Activated CD4-positive, alpha-beta T cell treated with anti-CD3 and anti-CD28 coated beads, Interleukin-2, amount 10 ng/mL, durations not matched to agents 24 days and 14 days (primary cell): ENCODE measurements at regions of chr19 and their contacts with region 1.

Region 1: DNA sequence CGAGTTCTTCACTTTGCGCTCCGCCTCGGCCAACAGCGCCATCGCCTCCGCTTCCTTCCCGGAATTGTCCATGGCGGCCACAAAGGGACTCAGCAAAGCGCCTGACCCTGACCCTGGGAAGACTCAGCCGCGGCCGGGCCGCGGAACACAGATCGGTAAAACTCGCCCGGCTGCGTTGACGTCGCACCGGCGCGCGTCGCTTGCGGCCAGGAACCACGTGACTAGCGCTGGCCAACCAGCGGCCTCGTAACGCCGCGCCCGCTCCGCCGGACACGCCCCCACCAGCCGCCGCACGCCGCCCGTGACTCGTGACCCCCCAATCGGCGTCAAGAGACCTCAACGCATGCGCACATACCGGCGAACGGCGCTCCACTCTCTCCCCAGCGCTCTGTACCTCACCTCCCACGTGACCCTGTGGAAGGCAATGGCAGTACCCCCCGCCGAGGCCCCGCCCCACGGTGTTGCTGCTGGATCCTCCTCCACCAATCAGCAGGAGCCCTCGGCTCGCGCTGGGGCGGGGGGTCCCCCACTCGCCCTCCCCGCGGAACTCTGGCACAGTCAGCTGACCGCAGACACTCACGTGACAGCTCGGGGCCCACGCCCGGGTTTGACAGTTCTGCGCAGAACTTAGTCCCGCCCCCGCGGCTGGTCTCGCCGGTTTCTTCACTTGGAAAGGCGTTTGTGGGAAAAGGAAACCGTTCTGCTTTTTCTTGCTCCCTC is at the start of gene NAPA:
- DNase-seq: peak; percentile 100
- H3K4me3 Mint-ChIP-seq: peak within 1 kb of the TSS; percentile 99
- H3K27ac Mint-ChIP-seq: peak within 1 kb of the TSS; percentile 95
- H3K4me1 Mint-ChIP-seq: peaks cover 78% of the 10 kb centered on the region
- H3K27me3 Mint-ChIP-seq: no peaks in the 10 kb centered on the region
- total RNA-seq, gene NAPA: 61.9 and 66.5 TPM in 2 replicates

Region 2: GRCh38 chr19:47273313-47273977 is 241.6 kb before region 1 on chr19:
- intact Hi-C with region 1: loop called (anchors 2 kb)
- DNase-seq: peak; percentile 98
- H3K4me3 Mint-ChIP-seq: peak overlapping the region; percentile 97
- H3K27ac Mint-ChIP-seq: peak overlapping the region; percentile 99
- H3K4me1 Mint-ChIP-seq: peaks cover 41% of the 10 kb centered on the region
- H3K27me3 Mint-ChIP-seq: no peaks in the 10 kb centered on the region

Region 3: DNA sequence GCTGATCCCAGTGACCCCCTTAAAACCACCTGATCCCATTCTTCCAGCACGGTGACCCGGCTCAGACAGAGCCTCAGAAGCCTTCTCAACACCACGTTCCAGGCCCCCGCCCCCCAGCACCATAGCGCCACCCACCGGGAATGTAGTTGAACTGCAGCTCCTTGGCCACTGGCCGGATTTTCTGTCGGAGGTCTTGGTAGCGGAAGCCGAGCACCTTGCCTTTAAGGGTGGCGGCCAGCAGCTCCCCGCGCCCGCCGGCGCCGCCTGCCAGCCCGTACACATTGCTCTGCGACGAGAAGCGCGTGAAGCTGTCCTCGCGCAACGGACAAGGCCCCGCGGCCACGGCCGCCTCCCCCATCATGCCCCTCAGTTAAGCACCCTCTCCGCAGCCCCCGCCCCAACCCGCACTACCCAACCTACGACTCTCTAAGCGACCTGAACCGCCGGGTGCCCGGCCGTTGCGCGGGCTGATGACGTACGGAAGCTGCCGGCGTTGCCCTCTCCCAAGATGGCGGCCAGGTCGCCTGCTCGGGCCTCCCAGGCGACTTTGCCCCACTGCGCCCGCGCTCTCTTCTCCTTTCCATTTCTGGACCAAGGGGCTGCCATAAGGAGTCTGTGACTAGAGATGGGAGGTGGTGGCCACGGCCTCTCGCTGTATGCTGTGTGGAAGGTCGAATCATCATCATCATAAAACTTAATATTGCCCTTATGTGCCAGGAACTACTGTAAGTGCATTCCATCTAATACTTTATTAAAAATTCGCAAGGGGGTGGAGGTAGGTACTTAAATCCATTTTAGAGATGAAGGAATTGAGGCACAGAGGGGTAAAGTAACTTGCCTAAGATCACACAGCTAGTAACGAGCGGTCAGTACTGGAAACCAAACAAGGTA is 31.0 kb before region 1 on chr19 and contains the start of gene KPTN:
- intact Hi-C with region 1: loop called (anchors 1 kb)
- DNase-seq: peak; percentile 97
- H3K4me3 Mint-ChIP-seq: peak within 1 kb of the TSS; percentile 99
- H3K27ac Mint-ChIP-seq: peak within 1 kb of the TSS; percentile 98
- H3K4me1 Mint-ChIP-seq: peaks cover 21% of the 10 kb centered on the region
- H3K27me3 Mint-ChIP-seq: no peaks in the 10 kb centered on the region
- total RNA-seq, gene KPTN: 10.1 and 12.2 TPM in 2 replicates

Region 4: DNA sequence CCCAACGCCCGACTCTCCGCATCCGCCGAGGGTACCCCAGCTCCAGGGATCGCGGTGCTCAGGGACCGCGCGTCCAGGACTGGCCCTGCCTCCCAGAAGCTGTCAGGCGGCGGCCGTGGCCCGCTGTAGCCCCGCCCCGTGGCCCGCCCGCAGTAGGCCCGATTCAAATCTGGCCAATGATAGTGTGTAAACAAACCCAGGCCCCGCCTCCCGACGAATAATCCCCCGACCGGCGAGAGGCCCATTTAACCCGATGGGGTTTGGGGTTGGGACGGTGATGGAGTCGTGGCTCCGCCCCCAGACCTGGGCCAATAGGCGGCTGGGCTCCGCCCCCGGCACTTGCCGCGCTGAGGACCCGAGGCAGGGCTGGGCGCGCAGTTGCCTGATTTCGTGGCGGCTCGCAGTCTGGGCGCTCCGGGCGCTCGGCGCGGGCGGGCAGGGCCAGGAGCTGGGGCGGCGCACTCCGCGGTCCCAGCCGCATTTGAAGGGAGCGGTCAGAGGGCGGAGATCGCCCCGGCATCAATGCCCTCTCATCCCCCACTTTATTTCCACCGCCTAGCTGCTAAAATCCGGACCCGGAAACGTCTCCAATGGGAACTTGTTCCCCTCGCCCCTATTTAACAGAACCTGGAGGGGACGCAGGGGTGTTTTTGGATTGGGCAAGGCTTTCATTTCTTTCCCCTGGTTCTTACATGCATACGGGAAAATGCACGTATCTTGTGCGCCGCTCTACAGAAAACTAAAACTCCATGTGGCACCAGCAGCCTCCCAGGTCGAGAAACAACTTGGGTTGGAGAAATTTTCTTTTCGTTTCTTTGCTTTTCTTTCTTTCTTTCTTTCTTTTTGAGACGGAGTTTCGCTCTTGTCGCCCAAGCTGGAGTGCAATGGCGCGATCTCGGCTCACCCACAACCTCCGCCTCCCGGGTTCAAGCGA is 85.5 kb after region 1 on chr19:
- intact Hi-C with region 1: loop called (anchors 2 kb)
- DNase-seq: peak; percentile 99
- H3K4me3 Mint-ChIP-seq: peak overlapping the region; percentile 91
- H3K27ac Mint-ChIP-seq: peak overlapping the region; percentile 88
- H3K4me1 Mint-ChIP-seq: peaks cover 29% of the 10 kb centered on the region
- H3K27me3 Mint-ChIP-seq: peaks cover 3% of the 10 kb centered on the region

Region 5: DNA sequence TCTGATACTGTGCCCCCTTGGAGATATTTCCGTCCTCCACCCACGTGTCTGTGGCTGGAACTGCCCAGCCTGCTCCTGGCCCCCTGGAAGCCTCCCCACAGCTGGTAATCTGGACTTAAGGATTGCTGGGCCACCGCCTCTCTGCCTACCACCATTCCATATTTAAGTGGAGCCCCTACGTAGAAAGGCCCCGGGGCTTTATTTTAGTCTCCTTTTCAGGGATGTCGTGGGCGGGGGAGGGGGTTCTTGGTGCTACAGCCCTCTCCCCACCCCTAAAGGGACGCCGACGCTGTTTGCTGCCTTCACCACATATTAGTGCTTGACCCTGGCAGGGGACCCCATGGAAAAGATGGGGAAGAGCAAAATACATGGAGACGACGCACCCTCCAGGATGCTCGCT is 227.6 kb after region 1 on chr19:
- intact Hi-C with region 1: loop called (anchors 1 kb)
- DNase-seq: no peak
- H3K4me3 Mint-ChIP-seq: peak overlapping the region; percentile 91
- H3K27ac Mint-ChIP-seq: peak overlapping the region; percentile 94
- H3K4me1 Mint-ChIP-seq: peaks cover 20% of the 10 kb centered on the region
- H3K27me3 Mint-ChIP-seq: peaks cover 2% of the 10 kb centered on the region